ENCODE measurements at regions of chr7 and their contacts with region 1.

Region 1: DNA sequence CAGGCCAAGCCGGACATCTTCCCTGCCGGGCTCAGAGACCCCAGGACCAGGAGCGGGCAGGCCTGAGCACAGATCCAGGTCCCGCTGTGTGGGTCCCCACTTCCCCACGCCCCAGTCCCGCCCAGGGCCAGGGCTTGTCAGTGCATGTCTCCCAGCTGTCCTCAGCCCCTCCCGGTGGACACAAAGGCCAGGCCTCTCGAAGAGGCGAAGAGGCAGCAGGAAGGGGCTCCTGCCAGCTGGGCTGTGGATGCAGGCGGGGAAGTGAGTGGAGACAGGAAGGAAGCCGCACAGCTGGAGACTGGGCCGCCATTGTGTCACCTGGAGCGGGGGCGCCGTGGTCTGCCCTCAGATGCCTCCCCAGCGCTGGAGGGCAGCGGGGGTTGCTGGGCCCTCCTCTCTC is 4.8 kb downstream of the GRIFIN start:
- DNase-seq: peak; percentile 34
- H3K4me3 ChIP-seq: no peak overlapping the region
- H3K27ac ChIP-seq: peak overlapping the region; percentile 22
- H3K4me1 ChIP-seq: peaks cover 7% of the 10 kb centered on the region
- H3K27me3 ChIP-seq: no peaks in the 10 kb centered on the region
- CTCF ChIP-seq: no peak
- POLR2A ChIP-seq: no peak

Region 2: GRCh38 chr7:1825897-1826741 is 645.3 kb before region 1 on chr7:
- CTCF ChIA-PET with region 1: no interaction called
- POLR2A ChIA-PET with region 1: no interaction called
- dilution Hi-C with region 1: no loop called
- intact Hi-C with region 1: no loop called
- DNase-seq: no peak
- H3K4me3 ChIP-seq: no peak overlapping the region
- H3K27ac ChIP-seq: no peak overlapping the region
- H3K4me1 ChIP-seq: no peaks in the 10 kb centered on the region
- H3K27me3 ChIP-seq: no peaks in the 10 kb centered on the region
- CTCF ChIP-seq: no peak
- POLR2A ChIP-seq: no peak

Region 3: GRCh38 chr7:2384354-2385243 is 86.8 kb before region 1 on chr7:
- CTCF ChIA-PET with region 1: interaction called, 43 read pairs
- POLR2A ChIA-PET with region 1: no interaction called
- dilution Hi-C with region 1: no loop called
- intact Hi-C with region 1: no loop called
- DNase-seq: no peak
- H3K4me3 ChIP-seq: no peak overlapping the region
- H3K27ac ChIP-seq: no peak overlapping the region
- H3K4me1 ChIP-seq: no peaks in the 10 kb centered on the region
- H3K27me3 ChIP-seq: no peaks in the 10 kb centered on the region
- CTCF ChIP-seq: no peak
- POLR2A ChIP-seq: no peak

Region 4: GRCh38 chr7:2411815-2412586 is 59.4 kb before region 1 on chr7:
- CTCF ChIA-PET with region 1: interaction called, 20 read pairs
- POLR2A ChIA-PET with region 1: no interaction called
- dilution Hi-C with region 1: no loop called
- intact Hi-C with region 1: no loop called
- DNase-seq: no peak
- H3K4me3 ChIP-seq: no peak overlapping the region
- H3K27ac ChIP-seq: peak overlapping the region; percentile 33
- H3K4me1 ChIP-seq: peaks cover 45% of the 10 kb centered on the region
- H3K27me3 ChIP-seq: no peaks in the 10 kb centered on the region
- CTCF ChIP-seq: no peak
- POLR2A ChIP-seq: no peak

Region 5: DNA sequence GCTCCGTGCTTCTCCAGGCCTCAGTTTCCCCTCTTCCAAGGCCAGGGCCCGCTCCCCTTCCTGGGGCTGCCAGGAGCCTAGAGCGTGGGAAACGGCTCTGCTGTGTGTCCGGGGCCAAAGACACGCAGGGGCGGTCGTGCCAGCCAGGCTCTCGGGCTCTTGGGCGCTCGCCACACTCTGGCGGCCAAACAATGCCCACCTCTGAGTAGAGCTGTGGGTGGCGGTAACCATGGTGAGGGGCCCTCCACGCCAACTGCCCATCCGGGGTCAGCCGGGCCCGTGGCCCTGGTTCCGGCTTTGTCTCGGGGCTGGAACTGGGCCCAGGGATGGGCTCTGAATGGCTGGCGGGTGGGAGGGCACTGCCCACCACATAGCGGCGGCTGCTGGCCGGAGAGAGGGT is 11.2 kb before region 1 on chr7:
- CTCF ChIA-PET with region 1: interaction called, 28 read pairs
- POLR2A ChIA-PET with region 1: no interaction called
- dilution Hi-C with region 1: no loop called
- intact Hi-C with region 1: no loop called
- DNase-seq: no peak
- H3K4me3 ChIP-seq: no peak overlapping the region
- H3K27ac ChIP-seq: no peak overlapping the region
- H3K4me1 ChIP-seq: no peaks in the 10 kb centered on the region
- H3K27me3 ChIP-seq: no peaks in the 10 kb centered on the region
- CTCF ChIP-seq: no peak
- POLR2A ChIP-seq: no peak

Measured in endothelial cell of umbilical vein (primary cell).